Mammary epithelial cell (primary cell): ENCODE measurements at regions of chr1 and their contacts with region 1.

Region 1: DNA sequence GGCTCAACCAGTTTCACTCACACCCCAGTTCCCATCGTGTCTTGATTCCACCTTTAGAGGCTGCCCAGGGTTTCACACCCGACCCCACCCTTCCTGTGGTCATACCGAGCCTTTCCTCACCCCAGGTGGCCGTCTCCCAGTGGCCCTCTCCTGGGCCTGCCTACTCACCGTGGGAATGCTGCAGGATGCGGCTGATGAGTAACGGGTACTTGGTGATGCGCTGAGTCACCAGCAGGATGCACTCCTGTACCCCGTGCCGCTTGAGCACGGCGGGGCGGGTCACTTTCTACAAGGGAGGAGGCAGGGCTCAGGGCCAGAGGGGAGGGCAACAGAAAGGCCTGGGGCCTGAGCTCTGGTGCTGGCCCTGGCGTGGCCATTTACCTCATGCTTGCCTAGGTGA is 16.4 kb downstream of the ARHGEF2 start:
- DNase-seq: peak; percentile 100
- H3K4me3 ChIP-seq: no peak overlapping the region
- H3K27ac ChIP-seq: peak overlapping the region; percentile 96
- H3K4me1 ChIP-seq: peaks cover 34% of the 10 kb centered on the region
- H3K27me3 ChIP-seq: no peaks in the 10 kb centered on the region
- CTCF ChIP-seq: peak; percentile 9 to 47

Region 2: DNA sequence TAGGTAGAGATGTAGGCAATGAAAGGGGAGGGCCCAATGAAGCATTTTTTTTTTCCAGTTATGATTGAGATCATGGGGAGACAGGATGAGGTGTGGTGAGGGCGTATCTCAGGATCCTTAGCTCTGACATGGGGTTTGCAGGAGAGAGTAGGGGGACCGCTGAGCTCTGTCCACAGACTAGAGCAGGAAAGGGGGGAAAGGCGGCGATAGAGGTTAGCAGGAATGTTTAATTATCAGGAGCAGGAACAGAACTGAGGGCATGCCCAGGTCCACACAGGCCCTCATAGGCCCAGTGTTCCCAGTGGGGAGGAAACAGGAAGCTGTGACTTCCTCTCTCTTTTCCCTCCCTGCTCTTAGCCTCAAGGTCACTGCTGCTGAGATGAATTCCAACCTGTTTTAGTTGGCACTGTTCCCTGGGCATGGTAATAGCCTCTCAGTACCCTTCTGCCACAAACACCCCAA is 21.4 kb before region 1 on chr1:
- CTCF ChIA-PET with region 1: no interaction called
- dilution Hi-C with region 1: no loop called
- in situ Hi-C with region 1: no loop called
- intact Hi-C with region 1: loop called (anchors 2 kb)
- DNase-seq: peak; percentile 51
- H3K4me3 ChIP-seq: no peak overlapping the region
- H3K27ac ChIP-seq: peak overlapping the region; percentile 52
- H3K4me1 ChIP-seq: peaks cover 40% of the 10 kb centered on the region
- H3K27me3 ChIP-seq: no peaks in the 10 kb centered on the region
- CTCF ChIP-seq: no peak

Region 3: DNA sequence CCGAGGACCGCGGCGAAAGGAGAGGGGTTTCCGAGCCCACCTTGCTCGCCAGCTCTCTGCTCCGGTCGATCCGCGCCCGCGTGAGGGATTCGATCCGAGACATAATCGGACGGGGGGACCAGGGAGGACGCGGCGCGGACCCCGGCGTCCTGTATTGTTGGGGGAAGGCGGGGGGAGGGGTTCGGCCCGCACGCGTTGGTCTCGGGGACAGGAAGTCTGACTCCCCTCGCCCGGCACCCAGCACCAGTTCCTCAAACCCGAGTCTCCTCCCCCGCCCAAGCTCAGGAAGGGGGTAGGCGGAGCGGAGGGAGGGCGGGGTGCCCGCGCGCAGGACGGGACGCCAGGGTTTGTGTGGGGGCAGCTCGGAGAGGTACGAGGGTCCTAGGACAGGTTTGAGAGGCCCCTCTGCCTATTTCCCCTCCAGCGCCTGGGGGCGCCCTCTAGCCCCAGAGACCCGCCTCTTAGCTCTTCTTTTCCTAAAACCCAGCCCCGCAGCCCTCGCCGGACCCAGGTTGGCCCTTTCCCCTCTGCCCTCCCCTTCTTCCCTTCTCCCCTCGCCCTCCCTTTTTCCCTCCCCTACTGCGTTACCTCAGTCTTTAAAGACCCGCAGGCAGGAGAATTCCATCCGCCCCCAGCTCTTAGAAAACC is 16.5 kb after region 1 on chr1 and contains the start of gene ARHGEF2:
- CTCF ChIA-PET with region 1: no interaction called
- dilution Hi-C with region 1: no loop called
- in situ Hi-C with region 1: no loop called
- intact Hi-C with region 1: loop called (anchors 1 kb)
- DNase-seq: peak; percentile 68
- H3K4me3 ChIP-seq: peak within 1 kb of the TSS; percentile 82 to 91 (median 91)
- H3K27ac ChIP-seq: peak within 1 kb of the TSS; percentile 76
- H3K4me1 ChIP-seq: peaks cover 73% of the 10 kb centered on the region
- H3K27me3 ChIP-seq: no peaks in the 10 kb centered on the region
- CTCF ChIP-seq: peak in 1 of 2 donors; percentile 29
- total RNA-seq, gene ARHGEF2: 79.4 to 161 TPM